Thyroid gland (tissue), 4 donors: ENCODE measurements at regions of chr2 and their contacts with region 1.

Region 1: GRCh38 chr2:219209236-219210195 is 2.9 kb downstream of the ZFAND2B start:
- DNase-seq: no peak
- H3K4me3 ChIP-seq: no peak overlapping the region
- H3K27ac ChIP-seq: peak overlapping the region; percentile 59 to 97 (median 94)
- H3K4me1 ChIP-seq: peaks cover 17 to 27% of the 10 kb centered on the region in 2 donors
- H3K27me3 ChIP-seq: no peaks in the 10 kb centered on the region
- CTCF ChIP-seq: no peak
- POLR2A ChIP-seq: no peak

Region 2: GRCh38 chr2:219177552-219178376 is 31.8 kb before region 1 on chr2 and contains the start of gene RETREG2:
- intact Hi-C with region 1: loop called (anchors 5 kb)
- DNase-seq: peak; percentile 78 to 87
- H3K4me3 ChIP-seq: peak within 1 kb of the TSS; percentile 56 to 97 (median 85)
- H3K27ac ChIP-seq: peak within 1 kb of the TSS; percentile 98 to 99 (median 98)
- H3K4me1 ChIP-seq: peaks cover 21 to 25% of the 10 kb centered on the region in 2 donors
- H3K27me3 ChIP-seq: no peaks in the 10 kb centered on the region
- CTCF ChIP-seq: peak in 3 of 6 experiments; percentile 36 to 50 (median 50)
- POLR2A ChIP-seq: peak; percentile 91 to 93
- total RNA-seq, gene RETREG2: 82.3 to 122 (median 100) TPM

Region 3: DNA sequence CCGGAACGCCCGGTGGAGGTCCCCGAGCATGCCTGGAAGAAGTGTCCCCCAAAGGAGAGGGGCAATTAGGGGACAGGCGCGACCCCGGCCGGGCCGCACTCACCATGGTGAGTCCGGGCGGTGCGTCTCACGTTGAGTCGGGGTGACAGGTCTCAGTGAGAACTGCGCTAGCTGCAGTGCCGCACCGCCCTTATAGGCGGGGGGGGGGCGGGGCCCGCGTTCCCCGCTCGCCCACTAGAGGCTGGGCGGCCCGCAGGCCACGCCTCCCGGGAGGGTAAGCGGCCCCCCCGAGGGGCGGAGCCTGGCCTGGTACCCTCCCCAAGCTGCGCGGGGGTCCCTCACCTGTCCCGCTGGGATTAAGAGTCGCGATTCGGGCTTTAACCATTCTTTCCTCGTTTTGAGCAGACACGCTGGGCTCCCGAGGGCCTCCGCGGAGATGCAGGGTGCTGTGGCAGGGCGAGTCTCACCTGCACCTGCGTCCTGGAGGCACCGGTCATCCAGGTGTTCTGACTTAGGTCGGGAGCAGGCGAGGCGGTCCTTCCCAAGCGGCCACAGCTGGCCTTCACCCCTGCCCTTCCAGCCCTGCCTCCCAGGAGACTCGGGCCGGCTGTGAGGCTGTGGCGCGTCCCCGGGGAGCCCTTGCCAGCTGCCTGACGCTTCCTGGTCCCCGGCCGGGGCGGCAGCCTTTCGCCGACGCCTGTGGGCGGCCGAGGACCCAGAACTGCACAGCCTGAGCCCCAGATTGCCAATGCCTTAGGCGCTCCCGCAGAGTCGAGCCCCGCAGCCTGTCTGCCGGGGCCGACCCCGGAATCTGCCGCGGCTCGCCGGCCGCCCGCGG is 44.5 kb after region 1 on chr2 and contains the start of gene TUBA4A:
- intact Hi-C with region 1: no loop called
- DNase-seq: peak; percentile 88 to 89
- H3K4me3 ChIP-seq: peak within 1 kb of the TSS; percentile 24 to 62 (median 49)
- H3K27ac ChIP-seq: peak within 1 kb of the TSS; percentile 18 to 49 (median 25)
- H3K4me1 ChIP-seq: peaks cover 28 to 43% of the 10 kb centered on the region in 2 donors
- H3K27me3 ChIP-seq: no peaks in the 10 kb centered on the region
- CTCF ChIP-seq: peak in 2 of 6 experiments; percentile 6 to 20
- POLR2A ChIP-seq: peak; percentile 48 to 97
- total RNA-seq, gene TUBA4A: 21.0 to 72.4 (median 34.8) TPM